ENCODE measurements at regions of chr3 and their contacts with region 1.

Region 1: GRCh38 chr3:112561731-112562688 is at the starts of genes ATG3 and SLC35A5:
- DNase-seq: peak; percentile 99
- ATAC-seq: peak; percentile 81
- H3K4me3 Mint-ChIP-seq: peak within 1 kb of the TSS; percentile 97
- H3K27ac Mint-ChIP-seq: peak within 1 kb of the TSS; percentile 98
- H3K4me1 Mint-ChIP-seq: peaks cover 35% of the 10 kb centered on the region
- H3K27me3 Mint-ChIP-seq: no peaks in the 10 kb centered on the region
- total RNA-seq, gene ATG3: 54.9 to 71.0 TPM
- total RNA-seq, gene SLC35A5: 16.5 to 18.7 TPM

Region 2: DNA sequence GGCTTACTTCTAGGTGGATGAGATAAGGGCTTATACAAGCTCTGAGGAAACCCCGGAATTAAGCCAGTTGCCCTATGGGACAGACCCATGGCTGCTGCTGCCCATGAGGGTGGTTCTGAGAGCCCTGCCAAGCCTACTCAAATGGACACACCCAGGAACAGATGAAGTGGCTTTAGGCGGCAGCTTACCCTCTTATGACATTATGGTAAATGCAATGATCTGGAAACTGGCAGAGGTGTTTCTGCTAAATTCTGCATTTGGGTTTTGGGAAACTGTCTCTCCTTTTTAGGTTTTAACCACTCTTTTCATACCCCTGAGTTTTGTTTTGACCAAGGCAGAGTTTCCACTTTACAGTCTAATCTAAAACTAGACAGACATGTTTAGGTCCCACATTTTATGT is 957.9 kb before region 1 on chr3:
- CTCF ChIA-PET with region 1: no interaction called
- POLR2A ChIA-PET with region 1: no interaction called
- intact Hi-C with region 1: loop called in 1 of 2 experiments (anchors 5 kb)
- DNase-seq: peak; percentile 67
- ATAC-seq: peak; percentile 64
- H3K4me3 Mint-ChIP-seq: peak overlapping the region; percentile 44
- H3K27ac Mint-ChIP-seq: peak overlapping the region; percentile 97
- H3K4me1 Mint-ChIP-seq: peaks cover 88% of the 10 kb centered on the region
- H3K27me3 Mint-ChIP-seq: no peaks in the 10 kb centered on the region

Region 3: DNA sequence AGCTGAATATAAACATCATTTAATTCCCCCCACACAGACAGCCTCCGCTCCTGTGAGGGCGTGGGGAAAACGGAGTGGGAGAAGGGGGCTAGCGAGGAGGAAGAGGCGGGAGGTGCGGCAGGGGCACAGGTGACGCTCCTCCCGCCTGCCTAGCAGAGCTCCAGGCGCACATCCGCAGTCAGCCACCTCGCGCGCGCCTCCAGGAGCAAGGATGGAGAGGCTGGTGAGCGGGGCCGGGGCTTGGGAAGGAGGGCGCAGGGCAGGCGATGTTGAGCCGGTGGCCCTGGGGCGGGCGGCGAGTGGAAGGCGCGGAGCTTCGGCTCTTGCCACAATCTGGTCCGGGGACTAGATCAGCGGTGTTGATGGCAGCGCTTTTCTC is 229.0 kb before region 1 on chr3 and contains the start of gene CD200:
- CTCF ChIA-PET with region 1: interaction called, 3 read pairs
- POLR2A ChIA-PET with region 1: interaction called, 11 read pairs
- intact Hi-C with region 1: loop called in 1 of 2 experiments (anchors 1 kb)
- DNase-seq: peak; percentile 78
- ATAC-seq: peak; percentile 70
- H3K4me3 Mint-ChIP-seq: peak within 1 kb of the TSS; percentile 84
- H3K27ac Mint-ChIP-seq: peak within 1 kb of the TSS; percentile 93
- H3K4me1 Mint-ChIP-seq: peaks cover 33% of the 10 kb centered on the region
- H3K27me3 Mint-ChIP-seq: no peaks in the 10 kb centered on the region
- total RNA-seq, gene CD200: 30.2 to 42.3 TPM

Region 4: DNA sequence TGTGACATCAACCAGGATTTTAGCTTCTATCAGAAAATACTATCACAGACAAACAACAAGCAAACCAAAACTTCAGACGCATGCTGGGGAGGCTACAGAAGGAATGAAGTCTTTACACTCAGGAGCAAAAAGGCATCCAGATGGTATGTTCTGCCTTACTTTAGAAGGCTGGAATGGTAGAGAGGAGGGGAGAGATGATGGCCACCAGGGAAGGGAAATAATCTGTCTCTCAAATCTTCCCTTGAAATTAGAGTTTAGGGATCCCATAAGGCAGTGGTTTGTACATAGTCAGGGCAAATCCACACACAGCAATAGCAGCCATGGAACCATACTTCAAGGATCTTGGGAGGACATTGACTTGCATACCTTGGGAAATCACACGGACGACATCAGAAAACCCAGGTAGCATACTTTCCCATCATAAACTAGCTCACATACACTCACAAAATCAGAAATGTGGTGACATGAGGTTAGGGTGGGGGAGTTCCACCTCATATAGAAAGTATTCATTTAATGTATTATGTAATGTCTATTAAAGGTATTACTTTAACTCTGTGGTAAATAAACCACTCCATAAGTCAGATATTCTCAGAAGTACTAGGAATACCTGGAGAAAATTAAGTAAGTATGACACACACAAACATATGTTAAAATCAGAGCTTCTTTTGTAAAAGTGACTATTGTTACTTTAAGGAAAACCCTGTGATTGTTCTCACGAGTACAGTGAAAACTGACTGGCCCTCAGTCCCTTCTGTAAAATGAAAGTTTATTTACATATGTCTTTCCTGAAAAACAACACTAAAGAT is 72.1 kb before region 1 on chr3:
- CTCF ChIA-PET with region 1: interaction called, 3 read pairs
- POLR2A ChIA-PET with region 1: no interaction called
- intact Hi-C with region 1: loop called in 1 of 2 experiments (anchors 2 kb)
- DNase-seq: no peak
- ATAC-seq: peak; percentile 21
- H3K4me3 Mint-ChIP-seq: peak overlapping the region; percentile 52
- H3K27ac Mint-ChIP-seq: peak overlapping the region; percentile 92
- H3K4me1 Mint-ChIP-seq: peaks cover 74% of the 10 kb centered on the region
- H3K27me3 Mint-ChIP-seq: no peaks in the 10 kb centered on the region

Region 5: DNA sequence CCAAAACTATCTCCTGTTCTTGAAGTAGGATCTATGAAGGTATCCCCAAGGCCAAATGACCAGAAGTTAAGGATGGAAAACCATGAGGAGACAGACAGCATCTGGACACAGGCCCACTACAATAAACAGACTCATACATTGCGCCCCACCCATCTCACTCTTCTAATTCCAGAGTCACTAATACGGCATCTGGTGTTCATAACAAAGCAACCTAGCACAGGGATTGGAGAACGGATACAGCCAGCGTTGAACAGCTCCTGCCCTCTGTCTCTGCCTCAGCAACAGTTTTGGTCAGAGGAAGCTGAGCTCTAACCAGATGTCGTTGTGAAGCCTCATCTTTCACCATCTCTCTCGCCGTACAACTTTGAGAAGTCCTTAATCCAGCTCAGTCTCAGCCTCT is 123.4 kb after region 1 on chr3:
- CTCF ChIA-PET with region 1: no interaction called
- POLR2A ChIA-PET with region 1: no interaction called
- intact Hi-C with region 1: no loop called
- DNase-seq: no peak
- ATAC-seq: no peak
- H3K4me3 Mint-ChIP-seq: no peak overlapping the region
- H3K27ac Mint-ChIP-seq: no peak overlapping the region
- H3K4me1 Mint-ChIP-seq: peaks cover 13% of the 10 kb centered on the region
- H3K27me3 Mint-ChIP-seq: peaks cover 4% of the 10 kb centered on the region

Region 6: DNA sequence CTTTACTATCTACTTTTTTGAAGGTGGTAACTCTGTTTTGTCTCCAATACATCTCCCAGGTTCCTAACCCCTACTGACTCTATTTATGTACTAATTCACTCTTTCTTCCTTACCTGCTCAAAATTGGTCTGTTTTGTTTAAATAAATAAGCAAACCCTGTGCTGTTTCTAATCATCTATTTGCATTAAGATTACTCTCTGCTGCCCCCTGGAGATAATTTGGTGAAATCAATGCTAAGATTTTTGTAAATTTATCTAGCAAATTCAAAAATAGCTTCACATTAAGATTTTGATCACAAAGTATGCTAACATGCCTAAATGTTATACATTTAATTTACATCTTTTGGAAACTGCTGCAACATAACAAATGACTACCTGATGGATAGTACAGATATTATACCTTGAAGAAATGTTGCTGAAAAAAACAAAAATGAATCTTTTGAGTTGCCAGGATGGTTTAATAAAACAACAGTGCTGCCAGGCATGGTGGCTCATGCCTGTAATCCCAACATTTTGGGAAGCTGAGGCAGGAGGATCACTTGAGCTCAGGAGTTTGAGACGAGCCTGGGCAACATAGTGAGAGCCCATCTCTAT is 417.3 kb after region 1 on chr3:
- CTCF ChIA-PET with region 1: interaction called, 3 read pairs
- POLR2A ChIA-PET with region 1: no interaction called
- intact Hi-C with region 1: loop called in 1 of 2 experiments (anchors 5 kb)
- DNase-seq: no peak
- ATAC-seq: no peak
- H3K4me3 Mint-ChIP-seq: no peak overlapping the region
- H3K27ac Mint-ChIP-seq: no peak overlapping the region
- H3K4me1 Mint-ChIP-seq: peaks cover 73% of the 10 kb centered on the region
- H3K27me3 Mint-ChIP-seq: no peaks in the 10 kb centered on the region

Region 7: GRCh38 chr3:113002679-113003078 is 440.7 kb after region 1 on chr3:
- CTCF ChIA-PET with region 1: no interaction called
- POLR2A ChIA-PET with region 1: no interaction called
- intact Hi-C with region 1: loop called in 1 of 2 experiments (anchors 1 kb)
- DNase-seq: peak; percentile 77
- ATAC-seq: peak; percentile 77
- H3K4me3 Mint-ChIP-seq: no peak overlapping the region
- H3K27ac Mint-ChIP-seq: peak overlapping the region; percentile 89
- H3K4me1 Mint-ChIP-seq: peaks cover 83% of the 10 kb centered on the region
- H3K27me3 Mint-ChIP-seq: no peaks in the 10 kb centered on the region

Region 8: GRCh38 chr3:113696658-113697499 is 1134.9 kb after region 1 on chr3:
- CTCF ChIA-PET with region 1: no interaction called
- POLR2A ChIA-PET with region 1: no interaction called
- intact Hi-C with region 1: loop called in 1 of 2 experiments (anchors 5 kb)
- DNase-seq: peak; percentile 99
- ATAC-seq: peak; percentile 92
- H3K4me3 Mint-ChIP-seq: no peak overlapping the region
- H3K27ac Mint-ChIP-seq: no peak overlapping the region
- H3K4me1 Mint-ChIP-seq: peaks cover 27% of the 10 kb centered on the region
- H3K27me3 Mint-ChIP-seq: no peaks in the 10 kb centered on the region